ENCODE measurements at regions of chr7 and their contacts with region 1.

Region 1: DNA sequence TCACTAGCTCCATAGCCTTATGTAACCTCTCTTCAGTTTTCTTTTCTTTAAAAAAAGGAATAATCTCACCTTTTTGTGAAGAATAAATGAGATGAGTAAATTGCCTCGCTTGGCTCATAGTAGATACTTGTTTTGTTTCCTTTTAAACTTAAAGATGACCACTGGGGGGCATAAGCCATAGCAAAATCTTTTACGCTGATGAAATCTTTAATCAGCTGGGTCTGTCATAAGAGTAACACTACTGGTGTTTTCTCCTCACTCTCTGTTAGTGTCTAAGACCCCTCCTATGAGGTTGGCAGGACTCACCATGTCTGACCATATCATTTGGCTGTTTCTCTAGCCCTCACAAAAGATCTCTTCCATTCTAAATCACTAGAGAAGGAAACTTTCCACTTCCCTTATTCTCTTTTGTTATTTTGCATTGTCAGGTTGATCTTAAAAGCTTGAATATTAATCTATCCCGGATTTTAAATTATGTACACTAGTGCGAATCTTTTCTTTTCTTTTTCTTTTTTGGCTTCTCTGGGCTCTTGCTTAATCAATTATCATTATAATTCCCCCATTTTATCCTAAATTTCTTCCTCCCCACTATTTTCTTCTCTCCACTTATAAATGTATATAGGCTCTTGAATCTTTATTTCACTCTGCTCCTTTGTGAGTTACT is 12.5 kb downstream of the STAG3 start:
- DNase-seq: peak; percentile 74
- ATAC-seq: peak; percentile 50
- H3K4me3 ChIP-seq: no peak overlapping the region
- H3K4me3 Mint-ChIP-seq: peak overlapping the region; percentile 49
- H3K27ac ChIP-seq: peak overlapping the region; percentile 81 to 83
- H3K27ac Mint-ChIP-seq: peak overlapping the region; percentile 93
- H3K4me1 ChIP-seq: peaks cover 52 to 57% of the 10 kb centered on the region in 2 donors
- H3K4me1 Mint-ChIP-seq: peaks cover 54% of the 10 kb centered on the region
- H3K27me3 ChIP-seq: no peaks in the 10 kb centered on the region
- H3K27me3 Mint-ChIP-seq: no peaks in the 10 kb centered on the region
- CTCF ChIP-seq: peak; percentile 74

Region 2: GRCh38 chr7:100177045-100178001 is 12.9 kb before region 1 on chr7 and contains the starts of genes GPC2 and STAG3:
- CTCF ChIA-PET with region 1: interaction called, 10 read pairs
- POLR2A ChIA-PET with region 1: interaction called, 4 read pairs
- intact Hi-C with region 1: loop called (anchors 2 kb)
- DNase-seq: peak; percentile 97
- ATAC-seq: peak; percentile 94
- H3K4me3 ChIP-seq: peak within 1 kb of the TSS; percentile 64 to 78 (median 70)
- H3K4me3 Mint-ChIP-seq: peak within 1 kb of the TSS; percentile 73
- H3K27ac ChIP-seq: peak within 1 kb of the TSS in 1 of 2 donors; percentile 39
- H3K27ac Mint-ChIP-seq: peak within 1 kb of the TSS; percentile 27
- H3K4me1 ChIP-seq: peaks cover 11 to 22% of the 10 kb centered on the region in 2 donors
- H3K4me1 Mint-ChIP-seq: peaks cover 26% of the 10 kb centered on the region
- H3K27me3 ChIP-seq: no peaks in the 10 kb centered on the region
- H3K27me3 Mint-ChIP-seq: no peaks in the 10 kb centered on the region
- CTCF ChIP-seq: no peak
- total RNA-seq, gene GPC2: 4.1 and 6.1 TPM in 2 replicates
- total RNA-seq, gene STAG3: 22.0 and 24.8 TPM in 2 replicates

Region 3: GRCh38 chr7:100208911-100209408 is 18.8 kb after region 1 on chr7:
- CTCF ChIA-PET with region 1: interaction called, 93 read pairs
- POLR2A ChIA-PET with region 1: interaction called, 13 read pairs
- intact Hi-C with region 1: no loop called
- DNase-seq: peak; percentile 30
- ATAC-seq: no peak
- H3K4me3 ChIP-seq: peak overlapping the region in 1 of 5 experiments; percentile 10
- H3K4me3 Mint-ChIP-seq: peak overlapping the region; percentile 46
- H3K27ac ChIP-seq: no peak overlapping the region
- H3K27ac Mint-ChIP-seq: peak overlapping the region; percentile 85
- H3K4me1 ChIP-seq: peaks cover 42 to 50% of the 10 kb centered on the region in 2 donors
- H3K4me1 Mint-ChIP-seq: peaks cover 64% of the 10 kb centered on the region
- H3K27me3 ChIP-seq: no peaks in the 10 kb centered on the region
- H3K27me3 Mint-ChIP-seq: no peaks in the 10 kb centered on the region
- CTCF ChIP-seq: no peak

Region 4: DNA sequence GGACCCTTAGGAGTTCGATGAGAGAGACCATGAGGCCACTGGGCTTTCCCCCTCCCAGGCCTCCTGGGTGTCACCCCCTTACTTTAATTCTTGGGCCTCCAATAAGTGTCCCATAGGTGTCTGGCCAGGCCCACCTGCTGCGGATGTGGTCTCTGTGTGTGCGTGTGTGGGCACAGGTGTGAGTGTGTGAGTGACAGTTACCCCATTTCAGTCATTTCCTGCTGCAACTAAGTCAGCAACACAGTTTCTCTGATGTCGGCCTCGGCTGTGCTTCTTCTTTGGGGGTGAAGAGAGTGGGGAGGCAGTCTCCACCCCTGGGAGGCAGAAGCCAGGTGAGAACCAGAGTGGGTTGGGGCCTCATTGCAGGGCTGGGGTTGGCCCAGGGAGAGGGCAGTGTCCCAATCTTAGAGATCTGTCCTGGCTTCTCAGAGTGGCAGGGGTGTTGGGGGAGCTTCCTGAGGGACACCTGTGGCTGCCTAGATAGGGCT is 31.1 kb after region 1 on chr7:
- CTCF ChIA-PET with region 1: interaction called, 93 read pairs
- POLR2A ChIA-PET with region 1: interaction called, 4 read pairs
- intact Hi-C with region 1: loop called (anchors 1 kb)
- DNase-seq: peak; percentile 84
- ATAC-seq: peak; percentile 56
- H3K4me3 ChIP-seq: peak overlapping the region in 4 of 5 experiments; percentile 53 to 65 (median 64)
- H3K4me3 Mint-ChIP-seq: peak overlapping the region; percentile 85
- H3K27ac ChIP-seq: peak overlapping the region; percentile 97 to 100
- H3K27ac Mint-ChIP-seq: peak overlapping the region; percentile 95
- H3K4me1 ChIP-seq: peaks cover 42 to 54% of the 10 kb centered on the region in 2 donors
- H3K4me1 Mint-ChIP-seq: peaks cover 74% of the 10 kb centered on the region
- H3K27me3 ChIP-seq: no peaks in the 10 kb centered on the region
- H3K27me3 Mint-ChIP-seq: no peaks in the 10 kb centered on the region
- CTCF ChIP-seq: no peak

Measured in B cell (primary cell).